ENCODE measurements at regions of chr6 and their contacts with region 1.

Region 1: GRCh38 chr6:154276810-154277628 is 79.6 kb downstream of the IPCEF1 start:
- DNase-seq: no peak
- H3K4me3 ChIP-seq: no peak overlapping the region
- H3K27ac ChIP-seq: no peak overlapping the region
- H3K4me1 ChIP-seq: no peaks in the 10 kb centered on the region
- H3K27me3 ChIP-seq: no peaks in the 10 kb centered on the region
- CTCF ChIP-seq: peak in 2 of 3 experiments; percentile 43 to 54
- POLR2A ChIP-seq: no peak

Region 2: GRCh38 chr6:153804755-153805330 is 472.2 kb before region 1 on chr6:
- intact Hi-C with region 1: no loop called
- DNase-seq: no peak
- H3K4me3 ChIP-seq: no peak overlapping the region
- H3K27ac ChIP-seq: no peak overlapping the region
- H3K4me1 ChIP-seq: no peaks in the 10 kb centered on the region
- H3K27me3 ChIP-seq: no peaks in the 10 kb centered on the region
- CTCF ChIP-seq: no peak
- POLR2A ChIP-seq: no peak

Region 3: GRCh38 chr6:153858529-153858928 is 418.5 kb before region 1 on chr6:
- intact Hi-C with region 1: no loop called
- DNase-seq: no peak
- H3K4me3 ChIP-seq: no peak overlapping the region
- H3K27ac ChIP-seq: no peak overlapping the region
- H3K4me1 ChIP-seq: no peaks in the 10 kb centered on the region
- H3K27me3 ChIP-seq: no peaks in the 10 kb centered on the region
- CTCF ChIP-seq: no peak
- POLR2A ChIP-seq: no peak

Region 4: GRCh38 chr6:154156135-154156896 is 120.7 kb before region 1 on chr6:
- intact Hi-C with region 1: loop called (anchors 10 kb)
- DNase-seq: no peak
- H3K4me3 ChIP-seq: no peak overlapping the region
- H3K27ac ChIP-seq: no peak overlapping the region
- H3K4me1 ChIP-seq: no peaks in the 10 kb centered on the region
- H3K27me3 ChIP-seq: no peaks in the 10 kb centered on the region
- CTCF ChIP-seq: peak in 2 of 3 experiments; percentile 19 to 39
- POLR2A ChIP-seq: no peak

Measured in vagina (tissue), 2 donors.